B cell (primary cell): ENCODE measurements at regions of chr16 and their contacts with region 1.

Region 1: GRCh38 chr16:68843482-68844210 is at the start of gene TANGO6:
- DNase-seq: peak; percentile 93
- ATAC-seq: peak; percentile 93
- H3K4me3 ChIP-seq: peak within 1 kb of the TSS; percentile 72 to 98 (median 94)
- H3K4me3 Mint-ChIP-seq: peak within 1 kb of the TSS; percentile 93
- H3K27ac ChIP-seq: peak within 1 kb of the TSS; percentile 70 to 84
- H3K27ac Mint-ChIP-seq: peak within 1 kb of the TSS; percentile 94
- H3K4me1 ChIP-seq: peaks cover 11 to 14% of the 10 kb centered on the region in 2 donors
- H3K4me1 Mint-ChIP-seq: peaks cover 21% of the 10 kb centered on the region
- H3K27me3 ChIP-seq: no peaks in the 10 kb centered on the region
- H3K27me3 Mint-ChIP-seq: no peaks in the 10 kb centered on the region
- CTCF ChIP-seq: no peak
- total RNA-seq, gene TANGO6: 42.8 and 47.1 TPM in 2 replicates

Region 2: DNA sequence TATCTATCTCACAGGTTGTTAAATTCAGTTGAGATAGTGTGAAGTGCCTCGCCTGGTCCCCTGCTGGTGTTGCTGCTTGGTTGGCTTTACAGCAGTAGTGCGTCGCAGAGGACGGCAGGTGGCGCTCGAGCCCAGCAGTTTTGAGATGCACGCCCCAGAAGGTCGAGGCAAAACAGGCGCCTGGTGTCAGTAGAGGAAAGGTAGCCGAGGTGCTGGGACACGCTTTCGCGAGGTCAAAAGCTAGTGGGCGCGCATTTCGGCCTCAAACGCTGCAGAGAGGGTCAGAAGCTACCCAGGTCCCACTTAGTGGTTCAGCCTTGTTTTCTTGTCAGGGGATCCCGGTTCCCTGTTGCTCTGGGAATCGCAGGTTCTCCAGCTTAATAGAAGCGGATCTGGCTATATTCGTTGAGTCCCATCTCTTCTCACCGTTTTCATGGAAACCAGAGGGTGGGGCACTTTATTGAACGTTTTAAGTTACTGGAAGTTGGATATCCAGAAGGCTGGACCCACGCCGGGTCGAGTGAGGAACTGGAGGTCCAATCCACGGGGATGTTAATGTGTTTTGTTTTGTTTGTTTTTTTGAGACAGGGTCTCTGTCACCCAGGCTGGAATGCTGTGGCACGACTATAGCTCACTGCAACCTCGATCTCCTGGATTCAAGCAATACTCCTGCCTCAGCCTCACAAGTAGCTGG is 314.8 kb before region 1 on chr16:
- CTCF ChIA-PET with region 1: interaction called, 16 read pairs
- POLR2A ChIA-PET with region 1: no interaction called
- intact Hi-C with region 1: loop called (anchors 1 kb)
- DNase-seq: peak; percentile 93
- ATAC-seq: peak; percentile 81
- H3K4me3 ChIP-seq: no peak overlapping the region
- H3K4me3 Mint-ChIP-seq: peak overlapping the region; percentile 90
- H3K27ac ChIP-seq: no peak overlapping the region
- H3K27ac Mint-ChIP-seq: peak overlapping the region; percentile 83
- H3K4me1 ChIP-seq: peaks cover 16 to 22% of the 10 kb centered on the region in 2 donors
- H3K4me1 Mint-ChIP-seq: peaks cover 17% of the 10 kb centered on the region
- H3K27me3 ChIP-seq: no peaks in the 10 kb centered on the region
- H3K27me3 Mint-ChIP-seq: no peaks in the 10 kb centered on the region
- CTCF ChIP-seq: peak; percentile 94

Region 3: GRCh38 chr16:68704232-68704867 is 139.3 kb before region 1 on chr16:
- CTCF ChIA-PET with region 1: interaction called, 7 read pairs
- POLR2A ChIA-PET with region 1: no interaction called
- intact Hi-C with region 1: loop called (anchors 1 kb)
- DNase-seq: peak; percentile 55
- ATAC-seq: peak; percentile 60
- H3K4me3 ChIP-seq: no peak overlapping the region
- H3K4me3 Mint-ChIP-seq: no peak overlapping the region
- H3K27ac ChIP-seq: no peak overlapping the region
- H3K27ac Mint-ChIP-seq: peak overlapping the region; percentile 6
- H3K4me1 ChIP-seq: no peaks in the 10 kb centered on the region
- H3K4me1 Mint-ChIP-seq: peaks cover 3% of the 10 kb centered on the region
- H3K27me3 ChIP-seq: no peaks in the 10 kb centered on the region
- H3K27me3 Mint-ChIP-seq: peaks cover 12% of the 10 kb centered on the region
- CTCF ChIP-seq: peak; percentile 64

Region 4: GRCh38 chr16:68800257-68800875 is 43.3 kb before region 1 on chr16:
- CTCF ChIA-PET with region 1: interaction called, 5 read pairs
- POLR2A ChIA-PET with region 1: interaction called, 3 read pairs
- intact Hi-C with region 1: loop called (anchors 1 kb)
- DNase-seq: peak; percentile 53
- ATAC-seq: peak; percentile 88
- H3K4me3 ChIP-seq: no peak overlapping the region
- H3K4me3 Mint-ChIP-seq: no peak overlapping the region
- H3K27ac ChIP-seq: no peak overlapping the region
- H3K27ac Mint-ChIP-seq: no peak overlapping the region
- H3K4me1 ChIP-seq: no peaks in the 10 kb centered on the region
- H3K4me1 Mint-ChIP-seq: peaks cover 3% of the 10 kb centered on the region
- H3K27me3 ChIP-seq: no peaks in the 10 kb centered on the region
- H3K27me3 Mint-ChIP-seq: no peaks in the 10 kb centered on the region
- CTCF ChIP-seq: peak; percentile 62

Region 5: GRCh38 chr16:69186642-69187445 is 343.2 kb after region 1 on chr16 and contains the start of gene SNTB2:
- CTCF ChIA-PET with region 1: interaction called, 3 read pairs
- POLR2A ChIA-PET with region 1: no interaction called
- intact Hi-C with region 1: loop called (anchors 1 kb)
- DNase-seq: peak; percentile 90
- ATAC-seq: peak; percentile 80
- H3K4me3 ChIP-seq: peak within 1 kb of the TSS; percentile 75 to 81 (median 76)
- H3K4me3 Mint-ChIP-seq: peak within 1 kb of the TSS; percentile 99
- H3K27ac ChIP-seq: peak within 1 kb of the TSS; percentile 72 to 77
- H3K27ac Mint-ChIP-seq: peak within 1 kb of the TSS; percentile 100
- H3K4me1 ChIP-seq: peaks cover 17 to 29% of the 10 kb centered on the region in 2 donors
- H3K4me1 Mint-ChIP-seq: peaks cover 32% of the 10 kb centered on the region
- H3K27me3 ChIP-seq: no peaks in the 10 kb centered on the region
- H3K27me3 Mint-ChIP-seq: no peaks in the 10 kb centered on the region
- CTCF ChIP-seq: no peak
- total RNA-seq, gene SNTB2: 16.2 and 19.3 TPM in 2 replicates

Region 6: GRCh38 chr16:70800781-70801530 is 1957.3 kb after region 1 on chr16 and contains the start of gene VAC14:
- CTCF ChIA-PET with region 1: no interaction called
- POLR2A ChIA-PET with region 1: no interaction called
- intact Hi-C with region 1: loop called (anchors 5 kb)
- DNase-seq: peak; percentile 97
- ATAC-seq: peak; percentile 98
- H3K4me3 ChIP-seq: peak within 1 kb of the TSS; percentile 38 to 86 (median 66)
- H3K4me3 Mint-ChIP-seq: peak within 1 kb of the TSS; percentile 98
- H3K27ac ChIP-seq: peak within 1 kb of the TSS; percentile 69 to 90
- H3K27ac Mint-ChIP-seq: peak within 1 kb of the TSS; percentile 96
- H3K4me1 ChIP-seq: peaks cover 16 to 21% of the 10 kb centered on the region in 2 donors
- H3K4me1 Mint-ChIP-seq: peaks cover 36% of the 10 kb centered on the region
- H3K27me3 ChIP-seq: peaks cover 0 to 6% (median 0%) of the 10 kb centered on the region in 4 experiments
- H3K27me3 Mint-ChIP-seq: no peaks in the 10 kb centered on the region
- CTCF ChIP-seq: no peak
- total RNA-seq, gene VAC14: 59.7 and 64.7 TPM in 2 replicates